Activated T-helper 2 cell treated with anti-CD3 and anti-CD28 coated beads, Interferon-gamma antibody, Interleukin-2, Interleukin-4, amounts not matched to agents 10 μg/mL and 5 μg/mL and 100 μg/mL, durations not matched to agents 14 hours and 24 hours and 36 hours (primary cell): ENCODE measurements at regions of chr6 and their contacts with region 1.

Region 1: DNA sequence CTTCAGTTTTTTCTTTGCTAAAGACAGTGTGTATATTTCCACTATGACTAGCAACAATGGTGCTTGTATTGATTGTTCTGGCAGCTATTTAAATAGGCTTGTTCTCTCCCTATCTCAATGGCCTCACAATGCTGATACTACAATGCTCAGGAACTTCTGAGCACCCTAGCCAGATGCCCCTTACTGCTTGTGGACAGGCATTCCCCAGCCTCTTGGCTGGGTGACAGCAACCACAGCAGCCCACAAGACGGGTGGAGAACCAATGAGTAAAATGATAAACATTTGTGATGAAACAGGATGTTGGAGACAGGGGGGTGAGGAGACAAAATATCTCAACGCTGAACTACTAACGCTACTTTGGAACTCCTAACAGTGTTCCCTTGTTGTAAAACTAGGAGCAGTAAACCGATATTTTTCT is 42.3 kb downstream of the HIVEP2 start:
- DNase-seq: peak; percentile 64
- H3K4me3 Mint-ChIP-seq: peak overlapping the region; percentile 53
- H3K27ac Mint-ChIP-seq: peak overlapping the region; percentile 84
- H3K4me1 Mint-ChIP-seq: peaks cover 60% of the 10 kb centered on the region
- H3K27me3 Mint-ChIP-seq: no peaks in the 10 kb centered on the region

Region 2: GRCh38 chr6:142885182-142885867 is 17.3 kb before region 1 on chr6:
- intact Hi-C with region 1: loop called (anchors 1 kb)
- DNase-seq: peak; percentile 26
- H3K4me3 Mint-ChIP-seq: peak overlapping the region; percentile 92
- H3K27ac Mint-ChIP-seq: peak overlapping the region; percentile 99
- H3K4me1 Mint-ChIP-seq: peaks cover 65% of the 10 kb centered on the region
- H3K27me3 Mint-ChIP-seq: no peaks in the 10 kb centered on the region